ENCODE measurements at regions of chr1 and their contacts with region 1.

Region 1: DNA sequence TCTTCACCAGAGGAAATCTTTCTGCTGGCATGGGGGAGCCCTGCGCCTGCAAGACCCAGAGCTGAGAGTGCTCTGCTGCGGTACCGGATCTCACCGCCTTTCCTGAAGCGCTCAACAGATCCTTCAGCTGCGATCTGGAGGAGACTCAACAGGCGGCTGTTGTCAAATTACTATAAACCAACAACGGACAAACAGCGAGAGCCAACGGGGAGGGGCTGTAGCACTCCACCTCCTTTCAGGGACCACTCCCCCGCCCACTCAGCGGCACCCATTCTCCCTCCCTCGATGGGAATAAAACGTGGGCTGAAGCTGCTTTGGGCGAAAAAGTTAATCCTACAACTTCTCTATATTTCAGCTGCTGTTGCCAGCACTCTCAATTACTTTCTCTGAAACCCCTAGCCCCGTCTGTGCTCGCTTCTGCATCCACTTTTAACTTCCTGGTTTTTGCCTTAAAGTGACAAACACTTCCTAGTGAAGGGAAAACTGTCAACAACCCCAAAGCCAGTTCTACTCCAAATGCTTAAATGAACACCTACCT is at the start of gene FMO5:
- DNase-seq: peak; percentile 42
- H3K4me3 ChIP-seq: peak within 1 kb of the TSS; percentile 69 to 89 (median 72)
- H3K27ac ChIP-seq: no peak within 1 kb of the TSS
- H3K4me1 ChIP-seq: no peaks in the 10 kb centered on the region
- H3K27me3 ChIP-seq: no peaks in the 10 kb centered on the region
- CTCF ChIP-seq: no peak
- total RNA-seq, gene FMO5: 0.94 to 1.3 TPM

Region 2: DNA sequence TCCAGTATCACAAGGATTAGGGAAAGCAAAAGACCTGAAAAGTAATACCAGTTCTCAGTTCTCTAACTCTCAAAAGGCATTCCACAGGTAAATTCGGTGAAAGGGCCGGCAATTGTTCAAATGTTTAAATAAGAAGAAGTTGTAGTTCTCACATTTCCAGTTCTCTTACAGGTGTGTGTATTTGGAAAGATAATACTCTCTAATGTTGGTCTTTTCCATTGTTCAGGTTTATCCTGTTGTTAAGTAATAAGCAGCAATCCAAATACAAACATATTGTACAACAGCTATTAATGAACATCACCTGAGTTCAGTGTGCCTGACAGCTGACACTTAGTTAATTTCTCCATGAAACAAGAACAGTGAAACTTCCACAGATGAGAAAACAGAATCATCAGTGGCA is 39.8 kb before region 1 on chr1:
- CTCF ChIA-PET with region 1: no interaction called
- dilution Hi-C with region 1: loop called (anchors 5 kb)
- in situ Hi-C with region 1: no loop called
- intact Hi-C with region 1: no loop called
- DNase-seq: no peak
- H3K4me3 ChIP-seq: no peak overlapping the region
- H3K27ac ChIP-seq: no peak overlapping the region
- H3K4me1 ChIP-seq: no peaks in the 10 kb centered on the region
- H3K27me3 ChIP-seq: no peaks in the 10 kb centered on the region
- CTCF ChIP-seq: no peak

Region 3: GRCh38 chr1:147264158-147264768 is 39.0 kb after region 1 on chr1:
- CTCF ChIA-PET with region 1: no interaction called
- dilution Hi-C with region 1: no loop called
- in situ Hi-C with region 1: no loop called
- intact Hi-C with region 1: no loop called
- DNase-seq: peak; percentile 67
- H3K4me3 ChIP-seq: no peak overlapping the region
- H3K27ac ChIP-seq: peak overlapping the region; percentile 29
- H3K4me1 ChIP-seq: peaks cover 17% of the 10 kb centered on the region
- H3K27me3 ChIP-seq: no peaks in the 10 kb centered on the region
- CTCF ChIP-seq: no peak